Posterior vena cava (tissue), 2 donors: ENCODE measurements at regions of chr11 and their contacts with region 1.

Region 1: DNA sequence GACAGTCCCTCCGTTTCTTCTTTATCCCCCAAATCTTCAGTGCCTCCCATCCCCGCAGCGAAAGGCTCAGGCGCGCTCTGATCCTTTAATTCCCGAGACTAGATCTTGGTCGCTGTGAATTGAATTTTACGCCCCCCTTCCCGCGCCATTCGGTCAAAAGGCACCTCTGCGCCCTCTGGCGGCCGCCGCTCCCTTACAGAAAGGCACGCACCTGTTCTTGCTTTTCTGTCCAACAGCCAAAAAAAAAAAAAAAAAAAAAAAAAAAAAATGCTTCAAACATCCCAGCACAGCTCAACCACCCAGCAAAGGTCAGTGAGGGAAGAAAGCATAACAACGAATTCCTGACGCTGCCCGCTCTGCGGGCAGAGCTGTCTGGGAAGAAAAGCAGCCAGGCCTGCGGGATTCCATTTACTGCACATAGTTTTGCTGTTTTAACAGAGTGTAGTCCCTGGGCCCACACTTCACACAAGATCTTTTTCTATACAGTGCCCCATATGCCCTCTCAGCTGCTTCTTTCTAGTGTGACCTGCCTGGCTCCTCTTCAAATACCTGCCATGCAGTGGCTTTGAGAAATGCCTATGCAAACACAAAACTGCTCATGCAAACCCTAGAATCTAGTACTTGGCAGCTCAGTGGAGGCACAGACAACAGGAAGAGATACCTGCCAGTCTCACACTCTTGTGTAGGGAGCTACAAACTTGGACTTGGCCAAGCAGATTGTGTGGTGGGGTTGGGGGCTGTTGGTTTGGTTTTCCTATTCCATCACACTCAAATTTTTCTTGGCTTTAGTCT is 1.3 kb upstream of the ESAM start:
- DNase-seq: peak; percentile 95

Region 2: DNA sequence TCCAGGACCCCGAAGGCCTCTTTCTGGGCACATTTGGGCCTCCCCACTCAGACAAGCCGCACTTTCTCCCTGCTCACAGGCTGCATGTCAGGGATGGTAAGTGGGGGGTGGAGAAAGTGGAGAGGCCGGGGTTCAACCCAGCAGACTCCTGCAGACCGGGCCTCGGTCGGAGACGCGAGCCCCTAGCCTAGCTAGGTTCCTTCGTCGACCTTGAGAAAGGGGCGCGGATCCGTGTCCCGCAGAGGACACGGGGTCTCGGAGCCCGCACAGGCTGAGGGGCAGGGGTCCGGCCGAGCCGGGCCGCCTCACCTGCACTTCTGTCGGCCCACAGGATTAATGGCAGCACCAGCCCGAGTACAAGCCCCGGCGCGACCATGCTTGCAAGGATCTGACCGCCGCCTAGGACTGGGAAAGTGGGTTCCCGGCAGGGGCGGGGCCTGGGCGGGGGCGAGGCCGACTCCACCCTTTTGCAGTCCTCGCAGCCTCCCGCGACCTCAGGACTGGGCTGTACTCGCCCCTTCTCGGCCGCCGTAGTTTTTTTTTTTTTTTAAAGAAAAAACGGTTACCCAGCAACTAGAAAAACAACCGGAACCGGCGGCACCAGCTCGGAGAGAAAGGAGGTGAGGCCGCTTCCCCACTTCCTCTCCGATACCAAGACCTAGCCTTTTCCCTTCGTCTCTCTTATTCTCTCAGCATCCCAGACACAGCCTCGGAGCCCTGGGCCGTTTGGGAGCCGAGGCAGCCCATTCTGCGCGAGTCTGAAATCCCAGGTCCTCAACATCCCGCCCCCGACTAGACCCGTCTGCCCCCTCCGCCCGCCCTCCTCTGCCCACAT is 89.8 kb before region 1 on chr11 and contains the starts of genes SIAE and SPA17:
- intact Hi-C with region 1: loop called (anchors 2 to 10 kb)
- DNase-seq: peak; percentile 98
- total RNA-seq, gene SIAE: 6.4 to 16.8 TPM
- total RNA-seq, gene SPA17: 3.4 to 4.0 TPM

Region 3: GRCh38 chr11:124717786-124718651 is 45.3 kb before region 1 on chr11:
- intact Hi-C with region 1: loop called in 1 of 2 experiments (anchors 1 kb)
- DNase-seq: peak; percentile 79

Region 4: GRCh38 chr11:124800226-124800929 is 37.0 kb after region 1 on chr11 and contains the start of gene MSANTD2:
- intact Hi-C with region 1: loop called (anchors 5 kb)
- DNase-seq: peak; percentile 95
- total RNA-seq, gene MSANTD2: 12.6 to 13.0 TPM

Region 5: DNA sequence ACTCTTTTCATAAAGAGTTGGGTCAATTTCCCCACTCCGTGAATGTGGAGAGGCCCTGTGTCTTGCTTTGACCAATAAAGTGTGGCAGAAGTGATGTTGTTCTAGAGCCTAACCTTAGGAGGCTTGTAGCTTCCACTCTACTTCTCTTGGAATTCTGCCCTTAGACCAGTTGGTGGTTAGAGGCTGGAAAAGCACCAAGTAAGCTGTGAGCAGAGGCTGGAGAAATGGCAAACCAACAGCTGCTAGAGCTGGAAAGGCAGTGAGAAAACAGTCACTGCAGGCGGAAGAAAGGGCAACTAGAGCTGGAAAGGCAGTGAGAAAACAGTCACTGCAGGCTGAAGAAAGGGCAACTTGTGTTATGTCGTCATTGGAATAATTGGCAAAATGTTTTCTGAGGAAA is 66.6 kb after region 1 on chr11:
- intact Hi-C with region 1: loop called in 1 of 2 experiments (anchors 5 kb)
- DNase-seq: no peak

Region 6: DNA sequence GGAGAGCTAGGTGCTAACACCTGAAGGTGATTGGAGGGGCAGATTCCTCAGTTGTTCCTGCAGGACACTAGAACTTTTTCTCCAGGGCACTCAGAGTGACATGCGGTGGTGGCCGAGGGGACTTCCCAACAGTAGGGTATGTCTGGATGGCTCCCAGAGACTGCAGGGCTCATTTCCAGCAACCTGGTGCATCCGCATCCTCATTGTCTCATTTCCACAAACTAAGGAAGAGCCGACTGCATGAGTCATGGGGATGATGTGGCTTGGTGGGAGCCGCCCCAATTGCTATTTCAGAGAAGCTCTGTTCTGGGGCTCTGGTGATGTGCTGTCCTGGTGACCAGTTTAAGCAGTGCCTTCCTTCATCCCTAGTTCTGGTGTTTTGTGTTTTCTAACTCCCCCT is 137.1 kb after region 1 on chr11:
- intact Hi-C with region 1: no loop called
- DNase-seq: peak; percentile 86